ENCODE measurements at regions of chr7 and their contacts with region 1.

Region 1: GRCh38 chr7:65438598-65438997 is 64.9 kb downstream of the ZNF92 start:
- DNase-seq: peak; percentile 92
- ATAC-seq: peak; percentile 77
- H3K4me3 ChIP-seq: no peak overlapping the region
- H3K27ac ChIP-seq: peak overlapping the region; percentile 57
- H3K4me1 ChIP-seq: peaks cover 41% of the 10 kb centered on the region
- H3K27me3 ChIP-seq: no peaks in the 10 kb centered on the region
- CTCF ChIP-seq: no peak

Region 2: DNA sequence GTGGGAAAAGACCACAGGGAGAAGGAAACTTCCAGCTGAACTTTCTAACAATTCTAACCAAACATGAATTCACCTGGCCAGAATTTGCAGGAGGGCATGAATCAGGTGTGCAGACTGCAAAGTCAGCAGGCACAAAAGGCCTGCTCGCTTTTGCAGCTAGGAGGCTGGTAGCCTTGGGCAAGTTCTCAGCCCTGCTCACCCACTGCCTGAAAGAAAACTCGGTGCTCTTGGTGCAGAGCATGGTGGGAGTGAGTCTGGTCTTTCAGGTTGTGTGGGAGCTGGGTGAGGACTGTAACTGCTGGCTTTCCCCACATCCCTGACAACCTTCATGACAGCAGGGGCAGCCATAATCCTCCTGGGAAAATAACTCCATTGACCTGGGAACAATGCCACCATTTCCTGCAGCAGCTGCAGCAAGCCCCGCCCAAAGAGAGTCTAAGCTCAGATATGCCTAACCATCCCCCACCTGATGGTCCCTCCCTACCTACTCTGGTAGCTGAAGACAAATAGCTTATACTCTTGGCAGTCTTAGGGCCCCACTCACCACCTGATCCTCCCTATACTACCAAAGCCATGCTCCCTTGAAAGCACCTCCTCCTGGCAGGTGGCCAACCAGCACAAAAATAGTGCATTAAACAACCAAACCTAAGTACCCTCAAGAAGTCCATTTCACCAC is 479.4 kb before region 1 on chr7:
- CTCF ChIA-PET with region 1: no interaction called
- POLR2A ChIA-PET with region 1: no interaction called
- intact Hi-C with region 1: no loop called
- DNase-seq: no peak
- ATAC-seq: no peak
- H3K4me3 ChIP-seq: no peak overlapping the region
- H3K27ac ChIP-seq: no peak overlapping the region
- H3K4me1 ChIP-seq: no peaks in the 10 kb centered on the region
- H3K27me3 ChIP-seq: no peaks in the 10 kb centered on the region
- CTCF ChIP-seq: no peak

Region 3: GRCh38 chr7:65373608-65374351 is 64.8 kb before region 1 on chr7 and contains the start of gene ZNF92:
- CTCF ChIA-PET with region 1: no interaction called
- POLR2A ChIA-PET with region 1: interaction called, 4 read pairs
- intact Hi-C with region 1: loop called (anchors 5 kb)
- DNase-seq: peak; percentile 98
- ATAC-seq: peak; percentile 98
- H3K4me3 ChIP-seq: peak within 1 kb of the TSS; percentile 98
- H3K27ac ChIP-seq: peak within 1 kb of the TSS; percentile 61
- H3K4me1 ChIP-seq: peaks cover 10% of the 10 kb centered on the region
- H3K27me3 ChIP-seq: no peaks in the 10 kb centered on the region
- CTCF ChIP-seq: no peak
- total RNA-seq, gene ZNF92: 6.3 and 7.6 TPM in 2 replicates

Measured in PC-3 (cell line).